WTC11 (cell line): ENCODE measurements at regions of chr1 and their contacts with region 1.

Region 1: DNA sequence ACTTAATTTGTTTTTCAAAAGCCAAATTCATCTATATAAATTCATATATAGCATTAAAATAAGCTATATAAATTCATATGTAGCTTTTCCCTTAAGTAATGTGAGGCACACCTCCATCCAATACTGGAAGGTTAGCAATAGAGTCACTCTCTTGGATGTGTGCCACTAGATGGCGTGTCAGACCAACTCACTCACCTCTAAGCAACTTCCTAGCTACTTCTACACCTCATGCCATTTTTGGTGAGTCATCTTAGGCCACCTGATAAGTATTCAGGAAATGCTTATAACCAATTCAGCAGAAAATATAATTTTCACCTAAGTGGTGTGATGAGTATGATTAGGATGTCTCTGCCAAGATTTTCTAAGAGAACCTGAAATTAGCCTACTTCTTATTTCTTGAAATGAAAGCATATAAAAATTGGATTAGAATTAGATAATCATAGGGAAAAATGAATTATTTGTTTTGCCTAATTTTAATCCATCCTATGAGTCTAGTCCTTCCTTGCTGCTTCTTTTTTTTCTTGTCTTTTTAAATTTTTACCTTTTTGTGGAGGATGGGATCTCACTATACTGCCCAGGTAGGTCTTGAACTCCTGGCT is 34.4 kb upstream of the TADA1 start:
- DNase-seq: peak; percentile 71
- ATAC-seq: peak; percentile 97
- H3K4me3 Mint-ChIP-seq: no peak overlapping the region
- H3K27ac Mint-ChIP-seq: no peak overlapping the region
- H3K4me1 Mint-ChIP-seq: no peaks in the 10 kb centered on the region
- H3K27me3 Mint-ChIP-seq: peaks cover 2% of the 10 kb centered on the region; the same call in 1 of the 2 replicates
- CTCF ChIP-seq: peak; percentile 59

Region 2: DNA sequence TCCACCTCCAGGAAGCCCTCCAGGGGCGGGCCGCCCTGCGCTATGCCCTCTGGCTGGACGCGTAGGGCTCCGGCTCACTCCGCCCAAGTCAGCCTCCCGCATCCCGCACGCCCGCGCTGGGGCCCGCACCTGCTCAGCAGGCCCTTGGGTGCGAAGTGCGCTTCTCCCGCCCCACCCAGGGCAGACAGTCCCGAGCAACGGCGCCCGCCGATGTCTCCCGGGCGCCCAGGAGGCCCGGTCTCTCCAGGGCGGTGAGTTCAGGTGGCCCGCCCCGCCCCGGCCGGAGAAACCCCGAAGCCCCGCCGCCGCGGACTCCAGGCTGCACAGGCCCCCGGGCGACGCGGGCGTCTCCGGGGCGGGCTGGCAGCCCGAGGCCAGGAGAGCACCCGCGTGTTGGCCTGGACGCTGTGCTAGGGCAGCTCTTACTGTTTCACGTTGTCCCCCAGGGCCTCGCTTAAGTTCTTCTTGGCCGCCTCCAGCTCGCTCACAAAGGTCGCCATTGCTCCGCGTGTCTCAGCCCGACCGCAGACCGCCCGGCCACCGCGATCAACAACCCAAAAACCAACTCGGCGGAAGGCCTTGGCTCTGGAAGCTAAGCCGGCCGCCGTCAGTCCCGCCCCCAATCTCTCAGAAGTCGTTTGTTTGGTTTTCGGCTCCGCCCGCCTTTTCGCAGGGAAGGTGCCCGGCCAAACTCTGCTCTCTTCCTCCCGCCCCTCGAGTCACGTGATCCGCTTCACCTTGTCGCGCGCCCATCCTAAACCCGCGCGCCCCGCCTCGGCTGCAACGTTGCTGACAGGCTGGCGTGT is 34.6 kb before region 1 on chr1 and contains the start of gene TADA1:
- CTCF ChIA-PET with region 1: interaction called, 17 read pairs
- POLR2A ChIA-PET with region 1: interaction called, 3 read pairs
- DNase-seq: peak; percentile 99
- ATAC-seq: peak; percentile 92
- H3K4me3 Mint-ChIP-seq: peak within 1 kb of the TSS; percentile 94
- H3K27ac Mint-ChIP-seq: peak within 1 kb of the TSS; percentile 97
- H3K4me1 Mint-ChIP-seq: peaks cover 38% of the 10 kb centered on the region
- H3K27me3 Mint-ChIP-seq: peaks cover 2% of the 10 kb centered on the region; the same call in 1 of the 2 replicates
- CTCF ChIP-seq: no peak
- total RNA-seq, gene TADA1: 16.6 to 18.8 TPM (median 17.5 TPM) in 3 replicates

Region 3: DNA sequence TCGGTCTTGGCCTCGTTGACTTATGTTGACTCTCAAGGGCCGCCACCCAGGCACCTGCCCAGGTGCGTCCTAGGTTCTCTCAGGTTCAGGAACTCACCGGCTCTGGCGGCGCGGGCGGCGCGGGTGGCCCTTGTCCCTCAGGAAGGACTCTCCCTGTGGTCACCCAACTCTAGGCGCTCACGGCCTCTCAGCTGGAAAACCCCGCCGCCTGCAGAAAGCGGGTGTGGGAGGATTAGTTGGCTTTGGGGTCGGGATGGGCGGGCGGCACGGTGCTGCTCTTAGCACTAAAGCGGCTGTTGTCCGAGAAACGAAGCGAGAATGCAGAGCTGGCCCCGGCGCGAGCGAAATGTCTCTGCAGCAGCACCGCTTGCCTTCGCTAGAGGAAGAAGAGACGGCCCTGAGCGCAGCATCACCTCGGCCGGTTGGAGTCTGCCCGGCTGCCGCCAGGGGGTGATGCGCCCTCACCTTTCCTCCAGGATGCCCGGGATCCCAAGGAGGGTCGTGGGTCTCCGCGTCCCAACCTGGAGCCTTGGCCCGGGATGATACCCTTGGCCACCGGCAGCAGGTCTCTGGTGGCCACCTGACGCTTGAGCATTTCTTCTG is 26.4 kb before region 1 on chr1:
- CTCF ChIA-PET with region 1: interaction called, 14 read pairs
- POLR2A ChIA-PET with region 1: no interaction called
- DNase-seq: peak; percentile 91
- ATAC-seq: peak; percentile 99
- H3K4me3 Mint-ChIP-seq: peak overlapping the region; percentile 61
- H3K27ac Mint-ChIP-seq: no peak overlapping the region
- H3K4me1 Mint-ChIP-seq: peaks cover 8% of the 10 kb centered on the region
- H3K27me3 Mint-ChIP-seq: peaks cover 42% of the 10 kb centered on the region
- CTCF ChIP-seq: peak; percentile 70

Region 4: GRCh38 chr1:166920561-166921475 is 10.3 kb after region 1 on chr1:
- CTCF ChIA-PET with region 1: interaction called, 19 read pairs
- POLR2A ChIA-PET with region 1: no interaction called
- DNase-seq: peak; percentile 75
- ATAC-seq: peak; percentile 83
- H3K4me3 Mint-ChIP-seq: peak overlapping the region; percentile 71
- H3K27ac Mint-ChIP-seq: no peak overlapping the region
- H3K4me1 Mint-ChIP-seq: peaks cover 20% of the 10 kb centered on the region
- H3K27me3 Mint-ChIP-seq: peaks cover 59% of the 10 kb centered on the region
- CTCF ChIP-seq: no peak

Region 5: DNA sequence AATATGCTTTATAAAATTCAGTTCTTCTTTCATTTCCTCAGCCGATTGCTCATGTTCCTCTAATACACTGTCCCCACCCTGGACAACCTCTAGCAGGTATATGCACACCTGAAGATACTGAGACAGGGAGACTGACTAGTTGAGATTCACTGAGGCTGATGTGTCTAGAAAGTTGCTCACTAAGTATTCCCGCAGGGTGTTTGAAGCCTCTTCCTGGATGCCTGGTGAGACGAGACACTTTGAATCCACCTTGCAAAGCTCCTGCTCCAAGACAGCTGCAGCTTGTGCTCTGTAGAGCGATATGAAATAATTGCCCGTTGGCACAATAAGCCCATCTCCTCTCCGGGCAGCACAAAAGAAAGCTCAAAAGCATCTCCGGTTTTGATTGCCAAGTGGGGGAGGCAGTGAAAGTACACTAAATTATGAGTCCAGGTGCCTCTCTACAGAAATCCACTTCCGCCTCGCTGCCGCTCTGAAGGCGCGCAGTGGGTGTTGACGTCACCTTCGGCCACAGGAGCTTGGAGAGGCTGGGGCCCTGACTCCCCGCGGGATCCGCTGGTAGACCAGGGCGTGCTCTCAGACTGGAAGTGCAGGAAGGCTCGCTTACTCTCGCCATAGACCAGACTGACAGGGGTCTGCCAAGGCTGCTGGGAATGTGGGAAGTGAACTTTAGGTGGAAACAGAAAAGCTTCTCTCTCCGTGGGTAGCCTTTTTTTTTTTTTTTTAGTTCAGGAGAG is 133.4 kb after region 1 on chr1:
- CTCF ChIA-PET with region 1: interaction called, 16 read pairs
- POLR2A ChIA-PET with region 1: no interaction called
- DNase-seq: peak; percentile 28
- ATAC-seq: peak; percentile 74
- H3K4me3 Mint-ChIP-seq: peak overlapping the region; percentile 18; the same call in 1 of the 2 replicates
- H3K27ac Mint-ChIP-seq: no peak overlapping the region
- H3K4me1 Mint-ChIP-seq: peaks cover 8% of the 10 kb centered on the region
- H3K27me3 Mint-ChIP-seq: peaks cover 2% of the 10 kb centered on the region; the same call in 1 of the 2 replicates
- CTCF ChIP-seq: no peak

Region 6: DNA sequence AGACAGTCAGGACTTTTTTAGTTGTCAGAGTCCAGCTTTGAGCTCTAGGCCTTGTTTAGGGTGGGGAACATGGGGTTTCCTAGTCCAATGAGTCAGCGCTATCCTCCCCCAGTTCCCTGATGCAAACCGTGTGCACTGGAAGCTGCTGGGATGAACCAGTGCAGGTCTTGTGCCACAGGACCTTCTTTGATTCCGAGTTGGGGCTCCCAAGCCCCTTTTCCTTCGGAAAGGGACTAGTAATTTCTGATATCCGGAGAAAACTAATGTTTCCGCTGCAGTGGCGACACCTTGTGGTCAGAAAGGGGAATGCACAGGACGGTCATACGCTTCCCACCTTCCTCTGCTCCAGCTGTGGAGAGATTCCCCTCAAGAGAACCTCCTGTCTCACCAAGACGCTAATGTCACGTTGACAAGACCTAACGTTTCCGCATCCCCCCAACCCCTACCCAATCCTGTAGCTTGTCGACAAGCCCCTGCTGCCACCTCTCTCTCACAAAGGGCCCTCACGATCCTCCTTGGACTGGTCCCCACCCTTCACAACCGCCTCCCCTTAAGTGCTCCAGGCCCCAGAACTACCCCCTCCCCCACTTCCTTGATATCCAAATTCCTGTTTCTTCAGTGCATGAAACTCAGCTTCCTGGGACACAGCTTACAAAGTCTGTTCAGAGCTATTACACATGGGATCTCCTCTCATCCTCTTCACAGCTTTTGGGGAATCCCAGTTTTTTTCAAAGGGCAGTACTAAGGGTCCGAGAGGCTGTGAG is 148.7 kb after region 1 on chr1:
- CTCF ChIA-PET with region 1: interaction called, 400 read pairs
- POLR2A ChIA-PET with region 1: interaction called, 3 read pairs
- DNase-seq: peak; percentile 88
- ATAC-seq: peak; percentile 73
- H3K4me3 Mint-ChIP-seq: peak overlapping the region; percentile 55
- H3K27ac Mint-ChIP-seq: no peak overlapping the region
- H3K4me1 Mint-ChIP-seq: peaks cover 17% of the 10 kb centered on the region
- H3K27me3 Mint-ChIP-seq: no peaks in the 10 kb centered on the region
- CTCF ChIP-seq: peak; percentile 98